ENCODE measurements at regions of chr22 and their contacts with region 1.

Region 1: DNA sequence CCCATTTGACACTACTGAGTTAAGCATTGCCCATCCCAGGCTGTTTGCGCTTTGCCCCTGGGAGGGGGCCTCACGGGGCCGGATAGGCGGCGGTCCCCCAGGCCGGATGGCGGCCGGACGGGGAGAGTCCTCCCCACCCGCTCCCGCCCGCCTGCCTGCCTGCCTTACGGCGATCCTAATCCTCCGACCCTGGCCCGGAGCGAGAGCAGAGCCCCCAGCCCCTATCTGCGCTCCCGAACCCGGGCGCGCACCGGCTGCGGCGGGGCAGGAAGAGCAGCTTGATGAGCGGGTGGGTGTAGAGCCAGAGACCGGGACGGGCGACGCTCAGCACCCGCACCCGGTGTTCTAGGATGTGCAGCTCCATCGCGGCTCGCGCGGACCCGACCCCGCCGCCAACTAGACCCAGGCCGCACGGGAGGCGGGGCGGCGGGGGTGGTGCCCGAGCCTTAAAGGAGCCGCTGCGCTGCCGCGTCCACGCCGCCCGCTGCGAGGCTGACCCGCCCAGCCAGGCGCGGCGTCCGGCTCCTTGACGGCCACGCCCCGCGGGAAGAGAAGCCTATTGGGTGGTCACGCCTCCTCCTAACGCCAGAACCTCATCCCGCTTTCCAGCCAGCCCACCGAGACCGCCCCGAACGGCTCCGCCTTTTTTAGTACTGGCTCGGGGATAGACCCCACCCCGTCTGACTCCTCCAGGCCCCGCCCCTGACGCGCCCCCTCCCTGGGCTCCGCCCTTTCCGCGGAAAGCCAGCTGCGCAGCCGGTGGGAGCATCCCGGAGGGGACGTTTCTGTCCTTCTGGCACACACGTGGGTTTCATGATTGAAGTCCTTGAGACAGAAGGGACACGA is at the start of gene CASTOR1:
- DNase-seq: peak; percentile 96 to 98 (median 98)
- ATAC-seq: peak; percentile 91
- H3K4me3 ChIP-seq: peak within 1 kb of the TSS; percentile 58
- H3K27ac ChIP-seq: 0 out of 3 replicates have a peak within 1 kb of the TSS, but pooled peaks have one; percentile 15
- H3K4me1 ChIP-seq: peaks cover 19 to 60% of the 10 kb centered on the region in 2 experiments; a peak in 4 of 5 replicates
- H3K27me3 ChIP-seq: no peaks in the 10 kb centered on the region
- CTCF ChIP-seq: no peak
- EP300 ChIP-seq: no peak
- POLR2A ChIP-seq: no peak
- RAD21 ChIP-seq: no peak
- polyA plus RNA-seq, gene CASTOR1: 0.35 to 0.56 TPM

Region 2: GRCh38 chr22:30104501-30105156 is 184.7 kb before region 1 on chr22:
- CTCF ChIA-PET with region 1: interaction called, 17 read pairs
- POLR2A ChIA-PET with region 1: no interaction called
- in situ Hi-C with region 1: no loop called
- intact Hi-C with region 1: no loop called
- DNase-seq: no peak
- ATAC-seq: no peak
- H3K4me3 ChIP-seq: no peak overlapping the region
- H3K27ac ChIP-seq: no peak overlapping the region
- H3K4me1 ChIP-seq: no peaks in the 10 kb centered on the region
- H3K27me3 ChIP-seq: no peaks in the 10 kb centered on the region
- CTCF ChIP-seq: no peak
- EP300 ChIP-seq: no peak
- POLR2A ChIP-seq: no peak
- RAD21 ChIP-seq: no peak

Region 3: GRCh38 chr22:30253205-30253852 is 36.0 kb before region 1 on chr22:
- CTCF ChIA-PET with region 1: interaction called, 3 read pairs
- POLR2A ChIA-PET with region 1: no interaction called
- in situ Hi-C with region 1: no loop called
- intact Hi-C with region 1: loop called (anchors 1 kb)
- DNase-seq: no peak
- ATAC-seq: no peak
- H3K4me3 ChIP-seq: no peak overlapping the region
- H3K27ac ChIP-seq: no peak overlapping the region
- H3K4me1 ChIP-seq: peaks cover 0 to 44% of the 10 kb centered on the region in 2 experiments; a peak in 2 of 5 replicates
- H3K27me3 ChIP-seq: peaks cover 0 to 3% of the 10 kb centered on the region in 2 experiments; a peak in 1 of 5 replicates
- CTCF ChIP-seq: no peak
- EP300 ChIP-seq: no peak
- POLR2A ChIP-seq: no peak
- RAD21 ChIP-seq: no peak

Region 4: DNA sequence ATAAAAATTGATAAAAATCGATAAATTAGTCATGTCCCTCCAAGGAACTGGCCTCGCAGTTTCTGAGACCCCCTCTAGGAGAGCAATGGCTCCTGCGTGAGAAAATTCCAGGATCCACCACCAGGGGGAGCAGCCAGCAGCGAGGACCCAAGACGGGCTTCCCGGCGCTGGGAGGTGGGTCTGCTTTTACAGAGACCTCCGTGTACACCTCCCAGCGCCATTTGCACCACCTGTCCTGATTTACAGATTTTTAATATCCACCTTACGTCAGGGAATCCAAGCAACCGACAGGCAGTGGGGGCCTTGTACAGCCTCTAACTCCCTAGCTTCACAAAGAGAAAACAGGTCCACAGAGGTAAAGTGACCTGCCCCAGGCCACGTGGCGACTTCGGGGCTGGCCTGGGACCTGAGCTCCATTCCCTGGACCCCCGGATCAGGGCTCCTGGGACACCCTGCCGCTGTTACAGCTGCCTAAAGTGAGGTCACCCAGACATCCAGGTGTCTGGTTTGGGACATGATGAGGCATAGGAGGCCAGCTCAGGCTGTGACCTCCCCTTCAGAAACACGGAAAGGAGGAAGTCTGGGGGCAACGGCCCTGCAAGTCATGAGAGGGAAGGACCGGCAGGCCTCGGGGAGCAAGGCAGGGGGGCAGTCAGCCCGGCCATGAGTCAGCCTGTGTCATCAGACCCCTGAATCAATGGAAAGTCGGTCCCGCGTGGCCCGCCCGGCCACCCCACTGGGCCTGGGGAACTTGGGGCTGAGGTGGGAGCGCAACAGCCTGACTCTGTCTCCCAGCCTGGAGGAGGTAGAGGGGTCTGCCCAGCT is 26.2 kb before region 1 on chr22:
- CTCF ChIA-PET with region 1: interaction called, 23 read pairs
- POLR2A ChIA-PET with region 1: interaction called, 6 read pairs
- in situ Hi-C with region 1: no loop called
- intact Hi-C with region 1: loop called (anchors 1 kb)
- DNase-seq: peak; percentile 71 to 78 (median 73)
- ATAC-seq: peak; percentile 83
- H3K4me3 ChIP-seq: no peak overlapping the region
- H3K27ac ChIP-seq: no peak overlapping the region; the same call in 2 of the 3 replicates
- H3K4me1 ChIP-seq: peaks cover 2 to 48% of the 10 kb centered on the region in 2 experiments; a peak in 3 of 5 replicates
- H3K27me3 ChIP-seq: no peaks in the 10 kb centered on the region
- CTCF ChIP-seq: peak; percentile 84 to 96 (median 86)
- EP300 ChIP-seq: no peak
- POLR2A ChIP-seq: no peak
- RAD21 ChIP-seq: peak; percentile 49 to 71

Region 5: GRCh38 chr22:30326706-30327362 is 37.5 kb after region 1 on chr22 and contains the start of gene TBC1D10A:
- CTCF ChIA-PET with region 1: interaction called, 5 read pairs
- POLR2A ChIA-PET with region 1: no interaction called
- in situ Hi-C with region 1: no loop called
- intact Hi-C with region 1: loop called (anchors 2 kb)
- DNase-seq: peak; percentile 91 to 98 (median 98)
- ATAC-seq: peak; percentile 92
- H3K4me3 ChIP-seq: peak within 1 kb of the TSS; percentile 69
- H3K27ac ChIP-seq: peak within 1 kb of the TSS; percentile 71
- H3K4me1 ChIP-seq: peaks cover 24 to 28% of the 10 kb centered on the region in 2 experiments; a peak in 4 of 5 replicates
- H3K27me3 ChIP-seq: no peaks in the 10 kb centered on the region
- CTCF ChIP-seq: no peak
- EP300 ChIP-seq: no peak
- POLR2A ChIP-seq: peak; percentile 63; the same call in 1 of the 2 replicates
- RAD21 ChIP-seq: no peak
- polyA plus RNA-seq, gene TBC1D10A: 0.13 to 0.18 TPM

Region 6: DNA sequence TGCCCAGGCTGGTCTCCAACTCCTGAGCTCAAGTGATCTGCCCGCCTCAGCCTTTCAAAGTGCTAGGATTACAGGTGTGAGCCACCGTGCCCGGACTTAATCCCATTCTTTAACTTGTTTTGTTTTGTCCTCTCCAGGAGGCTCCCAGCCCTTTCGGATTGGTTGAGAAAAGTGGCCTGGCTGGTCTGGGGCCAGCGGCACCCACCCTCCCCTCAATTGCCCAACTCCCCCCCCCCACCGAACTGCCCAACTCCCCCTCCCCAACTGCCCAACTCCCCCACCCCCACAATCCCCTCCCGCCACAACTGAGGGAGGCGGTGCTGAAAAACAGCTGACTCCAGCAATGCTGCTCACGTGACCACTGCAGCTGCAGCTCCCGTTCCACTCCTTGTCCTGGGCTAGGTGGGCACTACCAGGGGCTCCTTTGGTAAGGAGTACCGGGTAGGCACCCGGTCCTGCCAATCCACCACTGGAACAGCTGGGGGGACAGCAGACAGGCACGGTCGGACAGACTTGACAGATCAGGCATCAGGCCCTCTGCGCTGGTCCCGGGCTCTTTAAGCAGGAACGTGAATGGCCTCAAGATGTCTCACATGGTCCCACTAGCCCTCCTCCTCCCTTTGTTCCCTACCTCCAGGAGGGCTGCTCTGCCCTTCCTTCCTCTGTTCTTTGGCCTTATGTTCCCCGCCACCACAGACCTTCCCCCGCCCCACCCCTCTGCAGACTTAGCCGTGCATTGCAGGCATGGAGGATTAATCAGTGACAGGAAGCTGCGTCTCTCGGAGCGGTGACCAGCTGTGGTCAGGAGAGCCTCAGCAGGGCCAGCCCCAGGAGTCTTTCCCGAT is 317.3 kb after region 1 on chr22 and contains the start of gene TCN2:
- CTCF ChIA-PET with region 1: no interaction called
- POLR2A ChIA-PET with region 1: no interaction called
- in situ Hi-C with region 1: loop called (anchors 10 kb)
- intact Hi-C with region 1: no loop called
- DNase-seq: peak; percentile 49 to 73 (median 60)
- ATAC-seq: peak; percentile 80
- H3K4me3 ChIP-seq: peak within 1 kb of the TSS; percentile 41
- H3K27ac ChIP-seq: peak within 1 kb of the TSS; percentile 56
- H3K4me1 ChIP-seq: peaks cover 21 to 41% of the 10 kb centered on the region in 2 experiments
- H3K27me3 ChIP-seq: no peaks in the 10 kb centered on the region
- CTCF ChIP-seq: no peak
- EP300 ChIP-seq: no peak
- POLR2A ChIP-seq: no peak
- RAD21 ChIP-seq: no peak
- polyA plus RNA-seq, gene TCN2: 4.8 to 5.4 TPM

Region 7: GRCh38 chr22:30763815-30764686 is 474.7 kb after region 1 on chr22:
- CTCF ChIA-PET with region 1: no interaction called
- POLR2A ChIA-PET with region 1: no interaction called
- in situ Hi-C with region 1: no loop called
- intact Hi-C with region 1: no loop called
- DNase-seq: peak; percentile 49 to 75 (median 57)
- ATAC-seq: peak; percentile 80
- H3K4me3 ChIP-seq: no peak overlapping the region
- H3K27ac ChIP-seq: no peak overlapping the region
- H3K4me1 ChIP-seq: no peaks in the 10 kb centered on the region; a peak in 1 of 5 replicates
- H3K27me3 ChIP-seq: peaks cover 0 to 9% of the 10 kb centered on the region in 2 experiments; a peak in 1 of 5 replicates
- CTCF ChIP-seq: peak; percentile 67 to 80 (median 75)
- EP300 ChIP-seq: no peak
- POLR2A ChIP-seq: no peak
- RAD21 ChIP-seq: peak; percentile 67 to 82